ENCODE measurements at regions of chr10 and their contacts with region 1.

Region 1: DNA sequence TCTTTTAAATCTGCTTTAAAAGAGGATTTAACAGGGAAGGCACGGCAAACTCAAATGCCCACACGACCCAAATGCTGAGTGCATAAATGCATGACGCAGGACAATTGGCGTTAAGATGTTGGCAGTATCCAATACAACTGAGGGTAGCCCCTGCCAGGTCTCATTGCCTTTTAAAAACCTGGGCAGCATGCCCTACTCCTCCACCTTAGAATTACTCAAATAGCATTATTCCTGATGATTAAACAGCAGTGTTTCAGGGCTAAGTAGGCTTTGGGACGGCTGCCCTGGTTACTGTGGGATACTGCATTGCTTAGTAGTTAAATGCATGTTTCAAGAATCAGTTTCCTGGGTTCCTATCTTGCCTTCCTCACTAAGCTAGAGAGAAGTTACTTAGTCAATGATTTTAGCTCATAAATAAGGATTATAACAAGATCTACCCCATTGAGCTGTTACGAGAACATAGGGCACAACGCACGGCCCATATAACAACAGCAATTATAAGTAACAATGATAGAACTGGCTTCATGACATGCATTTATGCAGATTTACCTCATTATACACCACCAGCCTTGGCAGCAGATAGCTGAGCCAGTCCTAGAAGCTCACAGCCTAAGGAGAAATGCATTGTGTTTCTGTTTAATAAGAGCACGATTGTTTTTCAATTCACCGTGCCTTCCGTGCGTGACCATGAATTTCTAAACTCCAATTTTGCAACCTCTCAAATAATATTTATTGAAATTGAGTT is 7.9 kb downstream of the TUBAL3 start:
- ATAC-seq: peak in 2 of 8 experiments; percentile 35 to 63
- H3K4me3 ChIP-seq: no peak overlapping the region
- H3K27ac ChIP-seq: no peak overlapping the region
- H3K4me1 ChIP-seq: no peaks in the 10 kb centered on the region

Region 2: GRCh38 chr10:4437646-4438190 is 959.0 kb before region 1 on chr10:
- in situ Hi-C with region 1: no loop called
- ATAC-seq: no peak
- H3K4me3 ChIP-seq: no peak overlapping the region
- H3K27ac ChIP-seq: no peak overlapping the region
- H3K4me1 ChIP-seq: peaks cover 0 to 12% of the 10 kb centered on the region in 2 donors

Region 3: DNA sequence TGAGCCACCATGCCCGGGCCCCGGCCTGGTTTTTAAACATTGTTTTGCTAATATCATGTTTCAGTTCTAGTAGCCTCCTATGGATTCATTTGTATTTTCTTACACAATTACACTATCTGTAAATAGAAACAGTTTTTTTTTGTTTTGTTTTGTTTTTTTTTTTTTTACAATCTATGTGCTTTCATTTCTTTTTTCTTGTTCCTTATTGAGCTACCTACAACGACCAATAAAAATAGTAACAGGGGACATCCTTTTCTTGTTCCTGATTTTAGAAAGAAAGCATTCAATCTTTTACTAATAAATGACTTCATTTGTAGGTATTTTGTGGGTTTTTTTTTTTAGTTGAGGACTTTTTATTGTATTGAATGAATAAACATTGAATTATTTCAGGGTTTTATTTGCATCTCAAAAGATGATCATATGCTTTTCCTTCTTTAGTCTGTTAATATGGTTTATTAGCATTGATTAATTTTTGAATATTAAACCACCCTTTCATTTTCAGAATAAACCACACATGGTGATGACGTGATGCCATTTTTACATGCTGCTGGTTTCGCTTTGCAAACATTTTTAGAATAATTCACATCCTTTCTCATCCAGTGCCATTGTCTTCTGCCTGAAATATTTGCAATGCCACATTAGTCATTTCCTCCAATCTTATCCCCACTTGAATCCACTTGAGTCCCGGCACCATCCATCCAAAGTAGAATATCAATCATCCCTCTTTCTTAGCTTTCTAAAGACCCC is 588.8 kb before region 1 on chr10:
- in situ Hi-C with region 1: loop called in 1 of 9 experiments (anchors 25 kb)
- ATAC-seq: peak in 2 of 8 experiments; percentile 49 to 68
- H3K4me3 ChIP-seq: no peak overlapping the region
- H3K27ac ChIP-seq: no peak overlapping the region
- H3K4me1 ChIP-seq: peaks cover 0 to under 1% of the 10 kb centered on the region in 2 donors

Measured in motor neuron (in vitro differentiated cells).